CD8-positive, alpha-beta T cell (primary cell): ENCODE measurements at regions of chr12 and their contacts with region 1.

Region 1: GRCh38 chr12:25195056-25195971 is at the starts of genes DNAI7 and ETFRF1:
- DNase-seq: peak; percentile 92 to 99 (median 96)
- ATAC-seq: peak; percentile 97
- H3K4me3 ChIP-seq: peak within 1 kb of the TSS; percentile 77
- H3K4me3 Mint-ChIP-seq: peak within 1 kb of the TSS; percentile 97
- H3K27ac ChIP-seq: peak within 1 kb of the TSS; percentile 93 to 97
- H3K27ac Mint-ChIP-seq: peak within 1 kb of the TSS; percentile 99
- H3K4me1 ChIP-seq: peaks cover 18% of the 10 kb centered on the region
- H3K4me1 Mint-ChIP-seq: peaks cover 40% of the 10 kb centered on the region
- H3K27me3 ChIP-seq: no peaks in the 10 kb centered on the region
- H3K27me3 Mint-ChIP-seq: no peaks in the 10 kb centered on the region
- CTCF ChIP-seq: no peak
- total RNA-seq, gene DNAI7: 0.16 to 0.53 TPM
- total RNA-seq, gene ETFRF1: 29.2 to 30.1 TPM

Region 2: GRCh38 chr12:25151476-25151875 is 43.8 kb before region 1 on chr12:
- CTCF ChIA-PET with region 1: interaction called, 7 read pairs
- POLR2A ChIA-PET with region 1: interaction called, 4 read pairs
- intact Hi-C with region 1: loop called in 1 of 2 experiments (anchors 2 kb)
- DNase-seq: no peak
- ATAC-seq: no peak
- H3K4me3 ChIP-seq: no peak overlapping the region
- H3K4me3 Mint-ChIP-seq: no peak overlapping the region
- H3K27ac ChIP-seq: no peak overlapping the region
- H3K27ac Mint-ChIP-seq: no peak overlapping the region
- H3K4me1 ChIP-seq: peaks cover 4% of the 10 kb centered on the region
- H3K4me1 Mint-ChIP-seq: peaks cover 5% of the 10 kb centered on the region
- H3K27me3 ChIP-seq: no peaks in the 10 kb centered on the region
- H3K27me3 Mint-ChIP-seq: no peaks in the 10 kb centered on the region
- CTCF ChIP-seq: no peak

Region 3: DNA sequence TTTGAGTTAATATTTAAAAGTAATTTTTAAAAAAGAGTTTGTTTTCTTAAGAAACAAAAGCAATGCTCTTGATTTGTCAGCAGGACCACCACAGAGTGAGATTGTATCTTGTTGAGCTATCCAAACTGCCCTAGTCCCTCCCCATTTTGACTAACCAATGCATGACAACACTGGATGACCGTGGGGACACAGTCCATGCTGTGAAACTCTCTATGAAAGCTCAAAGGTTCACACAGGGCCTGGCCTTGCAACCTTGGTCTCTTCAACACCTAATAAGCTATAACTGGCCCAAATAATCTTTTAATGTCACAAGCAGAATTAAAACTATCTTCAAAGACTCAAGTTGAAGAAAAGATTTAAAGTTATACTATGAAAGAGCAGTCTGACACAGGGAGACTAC is 13.2 kb after region 1 on chr12:
- CTCF ChIA-PET with region 1: no interaction called
- POLR2A ChIA-PET with region 1: interaction called, 4 read pairs
- intact Hi-C with region 1: loop called in 1 of 2 experiments (anchors 2 kb)
- DNase-seq: no peak
- ATAC-seq: no peak
- H3K4me3 ChIP-seq: no peak overlapping the region
- H3K4me3 Mint-ChIP-seq: no peak overlapping the region
- H3K27ac ChIP-seq: no peak overlapping the region
- H3K27ac Mint-ChIP-seq: peak overlapping the region; percentile 32
- H3K4me1 ChIP-seq: no peaks in the 10 kb centered on the region
- H3K4me1 Mint-ChIP-seq: peaks cover 13% of the 10 kb centered on the region
- H3K27me3 ChIP-seq: no peaks in the 10 kb centered on the region
- H3K27me3 Mint-ChIP-seq: no peaks in the 10 kb centered on the region
- CTCF ChIP-seq: no peak

Region 4: DNA sequence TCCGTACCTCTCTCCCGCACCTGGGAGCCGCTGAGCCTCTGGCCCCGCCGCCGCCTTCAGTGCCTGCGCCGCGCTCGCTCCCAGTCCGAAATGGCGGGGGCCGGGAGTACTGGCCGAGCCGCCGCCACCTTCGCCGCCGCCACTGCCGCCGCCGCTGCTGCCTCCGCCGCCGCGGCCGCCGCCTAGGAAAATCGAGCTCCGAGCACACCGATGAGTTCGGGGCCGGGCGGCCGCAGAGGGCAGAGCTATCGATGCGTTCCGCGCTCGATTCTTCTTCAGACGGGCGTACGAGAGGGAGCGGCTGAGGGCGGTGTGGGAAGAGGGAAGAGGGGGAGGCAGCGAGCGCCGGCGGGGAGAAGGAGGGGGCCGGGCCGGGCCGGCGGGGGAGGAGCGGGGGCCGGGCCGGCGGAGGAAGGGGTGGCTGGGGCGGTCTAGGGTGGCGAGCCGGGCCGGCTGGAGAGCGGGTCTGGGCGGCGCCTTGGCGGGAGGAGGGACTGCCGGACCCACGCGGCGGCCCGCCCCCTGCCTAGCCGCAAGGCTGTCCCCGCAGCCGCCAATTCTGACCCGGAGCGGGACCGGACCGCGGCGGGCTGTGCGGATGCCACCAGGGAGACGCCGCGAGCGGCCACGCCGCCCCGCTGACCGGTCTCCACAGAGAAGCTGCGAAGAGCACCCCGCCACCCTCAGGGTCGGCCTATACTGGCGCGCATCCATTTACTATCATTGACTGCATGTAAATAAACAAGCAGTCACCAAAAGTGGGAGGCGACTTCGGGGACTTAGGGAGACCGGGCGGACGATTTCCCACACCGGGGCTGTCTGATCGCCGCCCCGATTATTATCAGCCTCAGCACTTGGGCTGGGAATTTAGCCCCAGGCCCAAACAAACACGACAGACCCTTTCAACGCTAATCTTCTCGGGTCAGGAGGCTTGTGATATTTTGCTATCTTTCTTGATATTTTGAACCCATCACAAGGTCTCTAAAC is 55.7 kb after region 1 on chr12 and contains the start of gene KRAS:
- CTCF ChIA-PET with region 1: interaction called, 3 read pairs
- POLR2A ChIA-PET with region 1: interaction called, 5 read pairs
- intact Hi-C with region 1: loop called (anchors 1 to 2 kb)
- DNase-seq: peak; percentile 84 to 98 (median 91)
- ATAC-seq: peak; percentile 90
- H3K4me3 ChIP-seq: peak within 1 kb of the TSS; percentile 70 to 79
- H3K4me3 Mint-ChIP-seq: peak within 1 kb of the TSS; percentile 93
- H3K27ac ChIP-seq: peak within 1 kb of the TSS; percentile 67 to 75
- H3K27ac Mint-ChIP-seq: peak within 1 kb of the TSS; percentile 95
- H3K4me1 ChIP-seq: peaks cover 11% of the 10 kb centered on the region
- H3K4me1 Mint-ChIP-seq: peaks cover 38% of the 10 kb centered on the region
- H3K27me3 ChIP-seq: no peaks in the 10 kb centered on the region
- H3K27me3 Mint-ChIP-seq: no peaks in the 10 kb centered on the region
- CTCF ChIP-seq: no peak
- total RNA-seq, gene KRAS: 47.1 to 49.3 TPM

Region 5: DNA sequence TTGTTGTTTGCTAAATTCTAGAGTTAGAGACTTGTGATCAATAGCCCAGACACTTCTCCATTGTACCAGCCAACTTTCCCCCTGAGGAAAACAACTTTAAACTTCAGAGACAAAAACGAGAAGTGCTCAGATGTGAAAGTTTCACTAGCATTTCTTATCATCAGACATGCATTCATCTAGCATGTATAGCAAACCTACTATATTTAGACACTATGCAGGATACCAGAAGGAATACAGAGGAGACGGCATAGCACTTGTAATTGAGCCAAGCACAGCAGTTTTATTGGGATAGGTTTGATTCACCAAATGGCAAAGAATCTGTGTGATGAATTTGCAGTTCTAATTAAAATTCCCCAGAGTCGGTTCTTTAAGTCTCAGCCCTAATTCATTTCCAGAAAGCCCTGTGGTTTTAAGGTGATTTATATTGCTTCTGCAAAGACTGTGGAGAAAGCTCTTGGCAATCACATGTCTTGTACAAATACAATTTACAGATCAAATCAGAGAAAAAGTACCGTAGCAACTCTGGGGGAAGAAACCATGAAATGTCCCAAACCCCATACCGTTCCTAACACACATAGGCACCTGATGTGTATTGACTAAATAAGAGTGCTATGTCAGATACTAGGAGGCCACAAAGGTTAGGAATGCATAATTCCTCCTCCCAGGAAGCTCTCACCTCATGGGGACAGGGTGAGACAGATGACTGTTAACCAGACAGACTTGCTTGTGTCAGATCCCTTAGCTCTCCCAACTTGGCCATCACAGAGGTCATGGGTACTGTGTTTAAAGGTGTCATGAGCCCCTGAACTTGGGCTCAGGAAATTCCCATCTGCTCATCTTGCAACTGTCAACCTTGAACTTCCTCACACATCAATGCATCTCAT is 125.1 kb after region 1 on chr12:
- CTCF ChIA-PET with region 1: interaction called, 3 read pairs
- POLR2A ChIA-PET with region 1: no interaction called
- intact Hi-C with region 1: loop called in 1 of 2 experiments (anchors 2 kb)
- DNase-seq: peak in 2 of 9 experiments; percentile 5 to 13
- ATAC-seq: no peak
- H3K4me3 ChIP-seq: no peak overlapping the region
- H3K4me3 Mint-ChIP-seq: no peak overlapping the region
- H3K27ac ChIP-seq: no peak overlapping the region
- H3K27ac Mint-ChIP-seq: no peak overlapping the region
- H3K4me1 ChIP-seq: peaks cover 37% of the 10 kb centered on the region
- H3K4me1 Mint-ChIP-seq: peaks cover 46% of the 10 kb centered on the region
- H3K27me3 ChIP-seq: no peaks in the 10 kb centered on the region
- H3K27me3 Mint-ChIP-seq: no peaks in the 10 kb centered on the region
- CTCF ChIP-seq: no peak

Region 6: DNA sequence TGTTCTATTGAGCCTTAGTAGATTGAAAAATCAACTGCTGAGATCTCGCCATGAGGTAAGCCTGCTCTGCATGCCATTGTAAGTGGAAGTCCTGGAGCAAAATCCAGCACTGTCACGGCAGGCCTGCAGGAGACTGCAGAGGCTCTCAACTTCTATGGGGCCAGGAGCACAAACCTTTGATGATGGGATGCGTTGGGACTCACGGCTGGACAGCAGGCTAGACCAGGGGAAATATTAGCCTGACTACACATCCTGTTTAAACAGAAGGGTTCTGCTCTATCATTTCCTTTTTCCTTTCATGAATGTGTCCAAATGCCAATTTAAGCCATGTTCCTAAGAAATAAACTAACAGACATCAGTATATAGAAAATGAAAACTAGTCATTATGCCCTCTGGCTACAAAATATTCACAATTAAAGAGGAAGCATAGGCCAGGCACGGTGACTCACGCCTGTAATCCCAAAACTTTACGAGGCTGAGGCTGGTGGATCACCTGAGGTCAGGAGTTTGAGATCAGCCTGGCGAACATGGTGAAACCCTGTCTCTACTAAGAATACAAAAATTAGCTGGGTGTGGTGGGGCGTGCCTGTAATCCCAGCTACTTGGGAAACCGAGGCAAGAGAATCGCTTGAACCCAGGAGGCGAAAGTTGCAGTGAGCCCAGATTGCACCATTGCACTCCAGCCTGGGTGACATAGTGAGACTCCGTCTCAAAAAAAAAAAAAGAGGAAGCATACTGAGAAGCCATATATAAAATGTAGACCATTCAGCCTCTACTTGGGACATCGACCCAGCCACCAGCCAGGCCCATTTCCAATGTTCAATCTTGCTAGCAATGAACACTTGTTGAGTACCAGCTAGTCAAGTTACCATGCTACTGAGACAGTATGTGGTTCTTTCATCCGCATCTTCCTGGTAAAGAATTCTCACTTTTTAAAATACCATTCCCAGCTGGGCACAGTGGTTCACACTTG is 729.5 kb after region 1 on chr12:
- CTCF ChIA-PET with region 1: no interaction called
- POLR2A ChIA-PET with region 1: no interaction called
- intact Hi-C with region 1: no loop called
- DNase-seq: no peak
- ATAC-seq: no peak
- H3K4me3 ChIP-seq: no peak overlapping the region
- H3K4me3 Mint-ChIP-seq: no peak overlapping the region
- H3K27ac ChIP-seq: no peak overlapping the region
- H3K27ac Mint-ChIP-seq: no peak overlapping the region
- H3K4me1 ChIP-seq: no peaks in the 10 kb centered on the region
- H3K4me1 Mint-ChIP-seq: no peaks in the 10 kb centered on the region
- H3K27me3 ChIP-seq: no peaks in the 10 kb centered on the region
- H3K27me3 Mint-ChIP-seq: no peaks in the 10 kb centered on the region
- CTCF ChIP-seq: no peak

Region 7: GRCh38 chr12:26126340-26127284 is 931.3 kb after region 1 on chr12:
- CTCF ChIA-PET with region 1: no interaction called
- POLR2A ChIA-PET with region 1: no interaction called
- intact Hi-C with region 1: loop called in 1 of 2 experiments (anchors 10 kb)
- DNase-seq: peak in 2 of 9 experiments; percentile 33 to 35
- ATAC-seq: no peak
- H3K4me3 ChIP-seq: peak overlapping the region in 1 of 2 experiments; percentile 39
- H3K4me3 Mint-ChIP-seq: peak overlapping the region; percentile 78
- H3K27ac ChIP-seq: no peak overlapping the region
- H3K27ac Mint-ChIP-seq: no peak overlapping the region
- H3K4me1 ChIP-seq: peaks cover 29% of the 10 kb centered on the region
- H3K4me1 Mint-ChIP-seq: peaks cover 40% of the 10 kb centered on the region
- H3K27me3 ChIP-seq: peaks cover 24 to 52% of the 10 kb centered on the region in 2 experiments
- H3K27me3 Mint-ChIP-seq: peaks cover 66% of the 10 kb centered on the region
- CTCF ChIP-seq: no peak

Region 8: DNA sequence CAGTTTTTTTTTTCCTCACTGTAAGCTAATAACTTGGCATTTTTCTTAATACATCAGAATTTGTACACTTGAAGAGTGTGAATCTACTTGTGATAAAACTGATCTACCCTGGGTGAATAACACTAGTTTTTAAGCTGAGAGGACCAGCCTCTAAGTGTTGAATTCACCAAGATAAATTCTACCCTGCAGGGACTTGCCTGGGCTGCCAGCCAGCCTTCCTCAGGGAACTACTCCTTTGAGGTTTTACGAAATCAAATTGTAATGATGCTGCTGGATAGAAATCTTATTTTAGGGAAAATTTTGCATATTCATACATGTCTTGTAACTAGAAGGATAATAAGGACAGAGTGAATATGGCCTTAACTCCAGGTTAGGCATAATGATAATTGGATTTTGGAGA is 1829.0 kb after region 1 on chr12:
- CTCF ChIA-PET with region 1: no interaction called
- POLR2A ChIA-PET with region 1: no interaction called
- intact Hi-C with region 1: loop called in 1 of 2 experiments (anchors 10 kb)
- DNase-seq: no peak
- ATAC-seq: no peak
- H3K4me3 ChIP-seq: no peak overlapping the region
- H3K4me3 Mint-ChIP-seq: peak overlapping the region; percentile 26
- H3K27ac ChIP-seq: no peak overlapping the region
- H3K27ac Mint-ChIP-seq: no peak overlapping the region
- H3K4me1 ChIP-seq: peaks cover 21% of the 10 kb centered on the region
- H3K4me1 Mint-ChIP-seq: peaks cover 47% of the 10 kb centered on the region
- H3K27me3 ChIP-seq: no peaks in the 10 kb centered on the region
- H3K27me3 Mint-ChIP-seq: no peaks in the 10 kb centered on the region
- CTCF ChIP-seq: no peak